ENCODE measurements at regions of chr12 and their contacts with region 1.

Region 1: GRCh38 chr12:66860752-66861750 is 182.2 kb upstream of the GRIP1 start:
- DNase-seq: peak; percentile 72
- H3K4me3 ChIP-seq: no peak overlapping the region
- H3K27ac ChIP-seq: no peak overlapping the region
- H3K4me1 ChIP-seq: peaks cover 21% of the 10 kb centered on the region
- CTCF ChIP-seq: peak; percentile 100

Region 2: GRCh38 chr12:66352197-66352596 is 508.9 kb before region 1 on chr12:
- CTCF ChIA-PET with region 1: no interaction called
- POLR2A ChIA-PET with region 1: interaction called, 4 read pairs
- intact Hi-C with region 1: loop called (anchors 2 kb)
- DNase-seq: peak; percentile 67
- H3K4me3 ChIP-seq: no peak overlapping the region
- H3K27ac ChIP-seq: no peak overlapping the region
- H3K4me1 ChIP-seq: no peaks in the 10 kb centered on the region
- CTCF ChIP-seq: peak; percentile 70

Region 3: GRCh38 chr12:66688846-66689439 is 172.1 kb before region 1 on chr12:
- CTCF ChIA-PET with region 1: no interaction called
- POLR2A ChIA-PET with region 1: no interaction called
- intact Hi-C with region 1: loop called (anchors 1 kb)
- DNase-seq: peak; percentile 90
- H3K4me3 ChIP-seq: no peak overlapping the region
- H3K27ac ChIP-seq: peak overlapping the region; percentile 0
- H3K4me1 ChIP-seq: peaks cover 68% of the 10 kb centered on the region
- CTCF ChIP-seq: peak; percentile 95

Region 4: GRCh38 chr12:66717036-66717673 is 143.9 kb before region 1 on chr12:
- CTCF ChIA-PET with region 1: no interaction called
- POLR2A ChIA-PET with region 1: no interaction called
- intact Hi-C with region 1: loop called (anchors 5 kb)
- DNase-seq: no peak
- H3K4me3 ChIP-seq: no peak overlapping the region
- H3K27ac ChIP-seq: no peak overlapping the region
- H3K4me1 ChIP-seq: peaks cover 5% of the 10 kb centered on the region
- CTCF ChIP-seq: peak; percentile 76

Region 5: DNA sequence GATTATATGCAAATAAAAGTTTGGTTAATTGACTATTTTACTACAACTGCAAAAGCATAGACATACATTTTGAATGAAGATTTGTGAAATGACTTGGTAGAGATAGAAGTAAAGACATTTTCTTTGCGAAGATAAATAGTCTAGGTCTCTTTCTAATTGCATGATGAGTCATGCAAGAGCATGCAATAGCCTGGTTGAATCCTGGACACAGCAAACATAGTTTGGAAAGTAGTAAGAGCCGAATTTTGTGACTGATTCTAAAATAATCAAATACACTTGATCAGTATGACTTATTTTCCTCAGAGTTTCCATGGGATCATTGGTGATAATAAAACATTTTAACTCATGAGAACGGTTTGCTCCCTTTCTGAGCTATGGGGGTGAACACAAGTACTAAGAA is 380.4 kb after region 1 on chr12:
- CTCF ChIA-PET with region 1: no interaction called
- POLR2A ChIA-PET with region 1: no interaction called
- intact Hi-C with region 1: no loop called
- DNase-seq: no peak
- H3K4me3 ChIP-seq: no peak overlapping the region
- H3K27ac ChIP-seq: no peak overlapping the region
- H3K4me1 ChIP-seq: no peaks in the 10 kb centered on the region
- CTCF ChIP-seq: no peak